Naive thymus-derived CD4-positive, alpha-beta T cell (primary cell): ENCODE measurements at regions of chr2 and their contacts with region 1.

Region 1: GRCh38 chr2:74553892-74554645 is at the start of gene LOXL3:
- DNase-seq: peak in 8 of 9 donors; percentile 63 to 87 (median 76)
- ATAC-seq: peak; percentile 67
- H3K4me3 ChIP-seq: peak within 1 kb of the TSS; percentile 70
- H3K4me3 Mint-ChIP-seq: peak within 1 kb of the TSS; percentile 85 to 96 (median 92)
- H3K27ac ChIP-seq: peak within 1 kb of the TSS; percentile 76
- H3K27ac Mint-ChIP-seq: peak within 1 kb of the TSS; percentile 62 to 95 (median 86)
- H3K4me1 ChIP-seq: peaks cover 7 to 17% of the 10 kb centered on the region in 2 donors
- H3K4me1 Mint-ChIP-seq: peaks cover 9 to 31% (median 18%) of the 10 kb centered on the region in 7 donors
- H3K27me3 ChIP-seq: peaks cover 0 to 10% of the 10 kb centered on the region in 2 donors
- H3K27me3 Mint-ChIP-seq: peaks cover 21 to 27% (median 24%) of the 10 kb centered on the region in 5 donors
- total RNA-seq, gene LOXL3: 0.50 to 6.9 (median 0.81) TPM

Region 2: GRCh38 chr2:74290466-74291217 is 263.4 kb before region 1 on chr2:
- CTCF ChIA-PET with region 1: no interaction called
- POLR2A ChIA-PET with region 1: no interaction called
- intact Hi-C with region 1: no loop called
- DNase-seq: peak in 8 of 9 donors; percentile 11 to 73 (median 57)
- ATAC-seq: peak; percentile 82
- H3K4me3 ChIP-seq: peak overlapping the region; percentile 27
- H3K4me3 Mint-ChIP-seq: peak overlapping the region; percentile 42 to 90 (median 76)
- H3K27ac ChIP-seq: peak overlapping the region; percentile 72
- H3K27ac Mint-ChIP-seq: peak overlapping the region; percentile 74 to 96 (median 91)
- H3K4me1 ChIP-seq: peaks cover 17 to 25% of the 10 kb centered on the region in 2 donors
- H3K4me1 Mint-ChIP-seq: peaks cover 12 to 35% (median 25%) of the 10 kb centered on the region in 7 donors
- H3K27me3 ChIP-seq: no peaks in the 10 kb centered on the region
- H3K27me3 Mint-ChIP-seq: no peaks in the 10 kb centered on the region

Region 3: DNA sequence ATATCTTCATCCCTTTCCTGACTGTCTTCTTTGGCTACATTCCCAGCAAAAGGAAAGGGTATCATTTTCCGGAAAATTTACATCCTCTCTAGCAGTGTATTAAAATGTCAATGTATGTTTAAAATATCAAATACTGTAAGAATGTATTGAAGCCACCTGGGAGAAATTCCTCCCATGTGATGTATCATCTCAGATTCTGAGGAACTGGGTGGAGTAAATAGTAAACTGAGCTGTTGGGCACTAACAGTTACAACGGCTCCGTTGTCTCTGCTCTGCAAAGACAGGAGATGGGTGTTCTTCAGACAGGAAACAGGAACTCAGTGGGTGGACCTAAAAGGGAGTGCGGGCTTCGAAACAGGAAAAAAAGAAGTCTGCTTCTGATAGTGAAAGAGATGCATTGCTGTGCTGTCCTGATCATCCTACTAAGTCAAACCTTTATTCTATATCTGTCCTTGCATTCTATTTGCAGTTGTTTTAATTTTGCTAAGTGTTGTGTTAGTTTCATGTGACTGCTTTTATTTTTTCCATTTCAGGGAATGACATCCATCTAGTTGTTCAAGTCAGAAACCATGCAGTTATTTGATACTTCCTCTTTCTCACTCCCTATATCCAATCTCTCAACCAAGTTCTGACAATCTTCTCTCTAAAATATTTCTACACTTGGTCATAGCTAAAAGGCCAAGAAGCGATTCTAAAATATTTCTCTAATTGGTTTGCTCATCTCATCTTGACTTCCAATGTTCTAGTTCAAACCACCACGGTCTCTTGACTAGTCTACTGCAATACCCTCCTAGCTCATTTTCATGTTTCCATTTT is 19.9 kb after region 1 on chr2:
- CTCF ChIA-PET with region 1: no interaction called
- POLR2A ChIA-PET with region 1: interaction called, 4 read pairs
- intact Hi-C with region 1: loop called in 1 of 2 experiments (anchors 1 kb)
- DNase-seq: peak in 6 of 9 donors; percentile 21 to 49 (median 42)
- ATAC-seq: peak; percentile 75
- H3K4me3 ChIP-seq: peak overlapping the region; percentile 20
- H3K4me3 Mint-ChIP-seq: peak overlapping the region; percentile 46 to 82 (median 75)
- H3K27ac ChIP-seq: peak overlapping the region; percentile 46
- H3K27ac Mint-ChIP-seq: peak overlapping the region; percentile 62 to 92 (median 86)
- H3K4me1 ChIP-seq: peaks cover 0 to 13% of the 10 kb centered on the region in 2 donors
- H3K4me1 Mint-ChIP-seq: peaks cover 16 to 44% (median 17%) of the 10 kb centered on the region in 7 donors
- H3K27me3 ChIP-seq: no peaks in the 10 kb centered on the region
- H3K27me3 Mint-ChIP-seq: peaks cover 0 to 16% (median 0%) of the 10 kb centered on the region in 5 donors

Region 4: DNA sequence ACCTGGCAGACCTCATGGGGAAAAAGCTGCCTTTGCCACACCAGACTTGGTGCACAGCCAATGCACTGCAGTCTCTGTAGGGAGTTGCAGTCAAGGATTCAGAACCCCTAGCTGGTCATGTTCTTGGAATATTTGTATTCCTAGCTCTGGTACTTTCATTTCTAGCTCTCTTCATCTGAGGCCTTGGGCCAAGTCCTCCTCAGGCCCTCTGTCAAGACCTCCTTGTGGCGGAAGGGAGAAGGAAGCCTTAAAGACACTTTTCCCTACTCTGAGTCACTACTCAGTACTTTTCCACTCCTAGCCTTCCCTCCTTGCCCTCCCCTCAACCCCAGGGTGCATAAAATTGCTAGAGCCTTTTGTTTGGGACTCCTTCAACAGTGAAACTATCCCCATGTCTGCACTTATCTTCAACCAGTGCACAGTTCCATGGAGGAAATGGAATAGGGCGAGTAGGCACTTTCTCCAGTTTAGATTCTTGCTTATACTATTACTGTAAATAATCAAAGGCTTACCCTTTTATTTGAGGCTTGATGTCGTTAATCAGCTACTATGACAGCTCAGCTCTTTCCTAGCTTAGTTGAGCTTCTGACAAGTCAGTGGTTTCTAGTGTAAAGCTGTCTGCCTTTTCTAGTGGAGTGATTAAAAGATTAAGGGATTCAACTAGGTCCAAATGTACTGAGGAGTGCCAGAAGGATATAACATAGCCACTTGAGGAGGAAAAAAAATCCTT is 78.3 kb after region 1 on chr2:
- CTCF ChIA-PET with region 1: no interaction called
- POLR2A ChIA-PET with region 1: no interaction called
- intact Hi-C with region 1: no loop called
- DNase-seq: no peak
- ATAC-seq: no peak
- H3K4me3 ChIP-seq: no peak overlapping the region
- H3K4me3 Mint-ChIP-seq: no peak overlapping the region
- H3K27ac ChIP-seq: no peak overlapping the region
- H3K27ac Mint-ChIP-seq: no peak overlapping the region
- H3K4me1 ChIP-seq: no peaks in the 10 kb centered on the region
- H3K4me1 Mint-ChIP-seq: no peaks in the 10 kb centered on the region
- H3K27me3 ChIP-seq: no peaks in the 10 kb centered on the region
- H3K27me3 Mint-ChIP-seq: peaks cover 0 to 48% (median 0%) of the 10 kb centered on the region in 5 donors

Region 5: DNA sequence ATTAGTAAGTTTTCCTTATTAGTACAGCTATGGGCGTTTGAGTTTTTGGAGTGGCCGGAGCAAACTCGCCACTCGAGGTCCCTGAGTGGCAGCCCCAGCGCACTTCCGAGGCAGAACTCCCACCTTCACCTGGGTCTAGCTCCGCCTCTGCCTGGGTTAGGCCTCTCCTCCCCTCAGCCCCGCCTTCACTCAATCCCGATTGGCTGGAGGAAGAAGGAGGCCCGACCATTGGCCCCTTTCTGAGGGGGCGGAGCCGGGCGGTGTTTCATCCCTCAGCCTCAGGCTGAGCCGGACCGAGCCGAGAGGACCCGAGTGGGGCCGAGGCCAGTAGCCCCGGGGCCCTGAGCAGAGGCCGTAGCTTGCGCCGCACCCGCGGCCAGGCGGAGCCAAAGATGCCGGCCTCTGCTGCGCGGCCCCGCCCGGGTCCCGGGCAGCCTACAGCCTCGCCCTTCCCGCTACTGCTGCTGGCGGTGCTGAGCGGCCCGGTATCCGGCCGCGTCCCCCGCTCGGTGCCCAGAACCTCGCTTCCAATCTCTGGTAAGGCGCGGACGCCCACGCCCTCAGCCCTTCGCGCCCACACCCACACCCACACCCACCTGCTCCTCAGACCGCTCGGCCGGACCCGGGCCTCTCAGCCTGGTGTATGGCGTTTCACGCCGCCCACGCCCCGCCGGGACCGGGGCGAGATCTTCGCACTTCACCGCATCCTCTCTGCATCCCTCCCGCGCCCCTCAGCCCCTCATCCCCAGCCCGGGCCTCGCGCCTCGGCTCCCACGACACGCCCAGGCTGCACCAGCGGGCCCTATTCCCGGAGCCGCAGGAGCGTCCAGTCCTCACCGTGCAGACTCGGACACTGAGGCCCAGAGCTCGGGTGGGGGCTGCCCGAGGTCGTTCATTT is 100.2 kb after region 1 on chr2 and contains the start of gene SEMA4F:
- CTCF ChIA-PET with region 1: no interaction called
- POLR2A ChIA-PET with region 1: no interaction called
- intact Hi-C with region 1: loop called (anchors 1 to 5 kb)
- DNase-seq: peak; percentile 85 to 95 (median 92)
- ATAC-seq: peak; percentile 100
- H3K4me3 ChIP-seq: peak within 1 kb of the TSS; percentile 86
- H3K4me3 Mint-ChIP-seq: peak within 1 kb of the TSS; percentile 82 to 97 (median 90)
- H3K27ac ChIP-seq: peak within 1 kb of the TSS; percentile 75
- H3K27ac Mint-ChIP-seq: peak within 1 kb of the TSS in 8 of 9 donors; percentile 59 to 96 (median 85)
- H3K4me1 ChIP-seq: peaks cover 6 to 8% of the 10 kb centered on the region in 2 donors
- H3K4me1 Mint-ChIP-seq: peaks cover 12 to 34% (median 23%) of the 10 kb centered on the region in 7 donors
- H3K27me3 ChIP-seq: no peaks in the 10 kb centered on the region
- H3K27me3 Mint-ChIP-seq: peaks cover 3 to 21% (median 5%) of the 10 kb centered on the region in 5 donors
- total RNA-seq, gene SEMA4F: 5.7 to 23.6 (median 11.0) TPM